Naive thymus-derived CD4-positive, alpha-beta T cell (primary cell): ENCODE measurements at regions of chr10 and their contacts with region 1.

Region 1: GRCh38 chr10:9097206-9097985 is 1042.9 kb downstream of the GATA3 start:
- DNase-seq: peak in 7 of 9 donors; percentile 29 to 89 (median 81)
- ATAC-seq: peak; percentile 81
- H3K4me3 ChIP-seq: no peak overlapping the region
- H3K4me3 Mint-ChIP-seq: peak overlapping the region in 7 of 10 donors; percentile 30 to 82 (median 67)
- H3K27ac ChIP-seq: no peak overlapping the region
- H3K27ac Mint-ChIP-seq: peak overlapping the region in 8 of 9 donors; percentile 64 to 97 (median 90)
- H3K4me1 ChIP-seq: peaks cover 0 to 26% of the 10 kb centered on the region in 2 donors
- H3K4me1 Mint-ChIP-seq: peaks cover 10 to 47% (median 43%) of the 10 kb centered on the region in 7 donors
- H3K27me3 ChIP-seq: no peaks in the 10 kb centered on the region
- H3K27me3 Mint-ChIP-seq: peaks cover 0 to 2% (median 0%) of the 10 kb centered on the region in 5 donors

Region 2: GRCh38 chr10:7787857-7788638 is 1309.3 kb before region 1 on chr10 and contains the starts of genes ATP5F1C and KIN:
- CTCF ChIA-PET with region 1: no interaction called
- POLR2A ChIA-PET with region 1: interaction called, 5 read pairs
- intact Hi-C with region 1: loop called in 1 of 2 experiments (anchors 5 kb)
- DNase-seq: peak; percentile 93 to 98 (median 96)
- ATAC-seq: peak; percentile 98
- H3K4me3 ChIP-seq: peak within 1 kb of the TSS; percentile 79
- H3K4me3 Mint-ChIP-seq: no peak within 1 kb of the TSS
- H3K27ac ChIP-seq: peak within 1 kb of the TSS; percentile 84
- H3K27ac Mint-ChIP-seq: peak within 1 kb of the TSS in 1 of 9 donors; percentile 90
- H3K4me1 ChIP-seq: peaks cover 21 to 28% of the 10 kb centered on the region in 2 donors
- H3K4me1 Mint-ChIP-seq: peaks cover 47 to 77% (median 57%) of the 10 kb centered on the region in 7 donors
- H3K27me3 ChIP-seq: no peaks in the 10 kb centered on the region
- H3K27me3 Mint-ChIP-seq: no peaks in the 10 kb centered on the region
- total RNA-seq, gene ATP5F1C: 113 to 290 (median 122) TPM
- total RNA-seq, gene KIN: 7.2 to 18.4 (median 14.3) TPM

Region 3: GRCh38 chr10:8898745-8899325 is 198.6 kb before region 1 on chr10:
- CTCF ChIA-PET with region 1: no interaction called
- POLR2A ChIA-PET with region 1: no interaction called
- intact Hi-C with region 1: no loop called
- DNase-seq: no peak
- ATAC-seq: peak; percentile 41
- H3K4me3 ChIP-seq: no peak overlapping the region
- H3K4me3 Mint-ChIP-seq: no peak overlapping the region
- H3K27ac ChIP-seq: no peak overlapping the region
- H3K27ac Mint-ChIP-seq: no peak overlapping the region
- H3K4me1 ChIP-seq: no peaks in the 10 kb centered on the region
- H3K4me1 Mint-ChIP-seq: peaks cover 0 to 8% (median 0%) of the 10 kb centered on the region in 7 donors
- H3K27me3 ChIP-seq: no peaks in the 10 kb centered on the region
- H3K27me3 Mint-ChIP-seq: no peaks in the 10 kb centered on the region

Region 4: GRCh38 chr10:9010093-9010492 is 87.3 kb before region 1 on chr10:
- CTCF ChIA-PET with region 1: no interaction called
- POLR2A ChIA-PET with region 1: interaction called, 10 read pairs
- intact Hi-C with region 1: loop called in 1 of 2 experiments (anchors 1 kb)
- DNase-seq: peak in 7 of 9 donors; percentile 62 to 87 (median 83)
- ATAC-seq: peak; percentile 94
- H3K4me3 ChIP-seq: no peak overlapping the region
- H3K4me3 Mint-ChIP-seq: peak overlapping the region in 9 of 10 donors; percentile 26 to 87 (median 65)
- H3K27ac ChIP-seq: no peak overlapping the region
- H3K27ac Mint-ChIP-seq: peak overlapping the region in 8 of 9 donors; percentile 72 to 96 (median 86)
- H3K4me1 ChIP-seq: peaks cover 5 to 28% of the 10 kb centered on the region in 2 donors
- H3K4me1 Mint-ChIP-seq: peaks cover 11 to 71% (median 55%) of the 10 kb centered on the region in 7 donors
- H3K27me3 ChIP-seq: no peaks in the 10 kb centered on the region
- H3K27me3 Mint-ChIP-seq: no peaks in the 10 kb centered on the region

Region 5: DNA sequence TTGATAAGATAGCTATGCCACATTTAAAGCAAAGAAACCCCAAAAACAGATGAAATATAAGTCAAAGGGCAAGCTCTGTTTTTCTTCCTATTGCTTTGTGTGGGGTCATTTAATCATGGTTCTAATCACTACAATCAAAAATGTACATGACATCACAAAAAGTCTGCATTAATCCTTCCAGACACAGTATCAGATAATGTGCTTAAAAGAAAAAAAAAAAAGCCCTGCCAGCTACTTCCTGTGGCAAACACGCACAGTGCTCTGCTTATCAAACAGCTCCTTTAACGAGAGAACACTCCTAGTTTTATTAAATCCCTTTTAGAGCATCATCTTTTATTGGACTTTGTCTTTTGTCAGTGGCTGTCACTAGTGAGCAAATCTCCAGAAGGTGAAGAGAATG is 37.1 kb before region 1 on chr10:
- CTCF ChIA-PET with region 1: no interaction called
- POLR2A ChIA-PET with region 1: interaction called, 11 read pairs
- intact Hi-C with region 1: loop called in 1 of 2 experiments (anchors 5 kb)
- DNase-seq: peak in 5 of 9 donors; percentile 18 to 35 (median 23)
- ATAC-seq: peak; percentile 60
- H3K4me3 ChIP-seq: peak overlapping the region; percentile 7
- H3K4me3 Mint-ChIP-seq: peak overlapping the region in 9 of 10 donors; percentile 47 to 79 (median 61)
- H3K27ac ChIP-seq: no peak overlapping the region
- H3K27ac Mint-ChIP-seq: peak overlapping the region in 3 of 9 donors; percentile 23 to 76 (median 53)
- H3K4me1 ChIP-seq: peaks cover 0 to 5% of the 10 kb centered on the region in 2 donors
- H3K4me1 Mint-ChIP-seq: peaks cover 0 to 26% (median 20%) of the 10 kb centered on the region in 7 donors
- H3K27me3 ChIP-seq: no peaks in the 10 kb centered on the region
- H3K27me3 Mint-ChIP-seq: peaks cover 0 to 4% (median 0%) of the 10 kb centered on the region in 5 donors

Region 6: GRCh38 chr10:9081961-9082360 is 15.4 kb before region 1 on chr10:
- CTCF ChIA-PET with region 1: no interaction called
- POLR2A ChIA-PET with region 1: interaction called, 8 read pairs
- intact Hi-C with region 1: loop called in 1 of 2 experiments (anchors 2 kb)
- DNase-seq: no peak
- ATAC-seq: no peak
- H3K4me3 ChIP-seq: no peak overlapping the region
- H3K4me3 Mint-ChIP-seq: no peak overlapping the region
- H3K27ac ChIP-seq: no peak overlapping the region
- H3K27ac Mint-ChIP-seq: peak overlapping the region in 1 of 9 donors; percentile 33
- H3K4me1 ChIP-seq: no peaks in the 10 kb centered on the region
- H3K4me1 Mint-ChIP-seq: peaks cover 0 to 20% (median 14%) of the 10 kb centered on the region in 7 donors
- H3K27me3 ChIP-seq: no peaks in the 10 kb centered on the region
- H3K27me3 Mint-ChIP-seq: peaks cover 0 to 2% (median 0%) of the 10 kb centered on the region in 5 donors

Region 7: GRCh38 chr10:9193120-9193519 is 95.7 kb after region 1 on chr10:
- CTCF ChIA-PET with region 1: no interaction called
- POLR2A ChIA-PET with region 1: no interaction called
- intact Hi-C with region 1: loop called in 1 of 2 experiments (anchors 5 kb)
- DNase-seq: no peak
- ATAC-seq: no peak
- H3K4me3 ChIP-seq: no peak overlapping the region
- H3K4me3 Mint-ChIP-seq: no peak overlapping the region
- H3K27ac ChIP-seq: no peak overlapping the region
- H3K27ac Mint-ChIP-seq: no peak overlapping the region
- H3K4me1 ChIP-seq: no peaks in the 10 kb centered on the region
- H3K4me1 Mint-ChIP-seq: peaks cover 0 to 19% (median 13%) of the 10 kb centered on the region in 7 donors
- H3K27me3 ChIP-seq: no peaks in the 10 kb centered on the region
- H3K27me3 Mint-ChIP-seq: peaks cover 0 to 20% (median 14%) of the 10 kb centered on the region in 5 donors